Naive thymus-derived CD4-positive, alpha-beta T cell (primary cell): ENCODE measurements at regions of chr11 and their contacts with region 1.

Region 1: GRCh38 chr11:14672635-14673034 is 29.0 kb downstream of the PDE3B start:
- DNase-seq: no peak
- ATAC-seq: no peak
- H3K4me3 ChIP-seq: no peak overlapping the region
- H3K4me3 Mint-ChIP-seq: peak overlapping the region in 1 of 10 donors; percentile 9
- H3K27ac ChIP-seq: no peak overlapping the region
- H3K27ac Mint-ChIP-seq: peak overlapping the region in 8 of 9 donors; percentile 24 to 90 (median 74)
- H3K4me1 ChIP-seq: no peaks in the 10 kb centered on the region
- H3K4me1 Mint-ChIP-seq: peaks cover 13 to 95% (median 81%) of the 10 kb centered on the region in 7 donors
- H3K27me3 ChIP-seq: no peaks in the 10 kb centered on the region
- H3K27me3 Mint-ChIP-seq: no peaks in the 10 kb centered on the region

Region 2: GRCh38 chr11:14656536-14657457 is 15.8 kb before region 1 on chr11:
- CTCF ChIA-PET with region 1: no interaction called
- POLR2A ChIA-PET with region 1: interaction called, 6 read pairs
- intact Hi-C with region 1: loop called in 1 of 2 experiments (anchors 1 kb)
- DNase-seq: no peak
- ATAC-seq: no peak
- H3K4me3 ChIP-seq: no peak overlapping the region
- H3K4me3 Mint-ChIP-seq: peak overlapping the region in 1 of 10 donors; percentile 1
- H3K27ac ChIP-seq: no peak overlapping the region
- H3K27ac Mint-ChIP-seq: peak overlapping the region in 5 of 9 donors; percentile 1 to 39 (median 8)
- H3K4me1 ChIP-seq: peaks cover 0 to 22% of the 10 kb centered on the region in 2 donors
- H3K4me1 Mint-ChIP-seq: peaks cover 32 to 84% (median 71%) of the 10 kb centered on the region in 7 donors
- H3K27me3 ChIP-seq: no peaks in the 10 kb centered on the region
- H3K27me3 Mint-ChIP-seq: no peaks in the 10 kb centered on the region

Region 3: GRCh38 chr11:14687943-14688627 is 15.4 kb after region 1 on chr11:
- CTCF ChIA-PET with region 1: no interaction called
- POLR2A ChIA-PET with region 1: interaction called, 4 read pairs
- intact Hi-C with region 1: loop called in 1 of 2 experiments (anchors 2 kb)
- DNase-seq: no peak
- ATAC-seq: peak; percentile 36
- H3K4me3 ChIP-seq: no peak overlapping the region
- H3K4me3 Mint-ChIP-seq: peak overlapping the region in 2 of 10 donors; percentile 13 to 26
- H3K27ac ChIP-seq: no peak overlapping the region
- H3K27ac Mint-ChIP-seq: peak overlapping the region in 5 of 9 donors; percentile 55 to 78 (median 68)
- H3K4me1 ChIP-seq: peaks cover 0 to 16% of the 10 kb centered on the region in 2 donors
- H3K4me1 Mint-ChIP-seq: peaks cover 32 to 72% (median 67%) of the 10 kb centered on the region in 7 donors
- H3K27me3 ChIP-seq: no peaks in the 10 kb centered on the region
- H3K27me3 Mint-ChIP-seq: no peaks in the 10 kb centered on the region